Activated naive CD4-positive, alpha-beta T cell treated with anti-CD3 and anti-CD28 coated beads for 36 hours (primary cell): ENCODE measurements at regions of chr1 and their contacts with region 1.

Region 1: DNA sequence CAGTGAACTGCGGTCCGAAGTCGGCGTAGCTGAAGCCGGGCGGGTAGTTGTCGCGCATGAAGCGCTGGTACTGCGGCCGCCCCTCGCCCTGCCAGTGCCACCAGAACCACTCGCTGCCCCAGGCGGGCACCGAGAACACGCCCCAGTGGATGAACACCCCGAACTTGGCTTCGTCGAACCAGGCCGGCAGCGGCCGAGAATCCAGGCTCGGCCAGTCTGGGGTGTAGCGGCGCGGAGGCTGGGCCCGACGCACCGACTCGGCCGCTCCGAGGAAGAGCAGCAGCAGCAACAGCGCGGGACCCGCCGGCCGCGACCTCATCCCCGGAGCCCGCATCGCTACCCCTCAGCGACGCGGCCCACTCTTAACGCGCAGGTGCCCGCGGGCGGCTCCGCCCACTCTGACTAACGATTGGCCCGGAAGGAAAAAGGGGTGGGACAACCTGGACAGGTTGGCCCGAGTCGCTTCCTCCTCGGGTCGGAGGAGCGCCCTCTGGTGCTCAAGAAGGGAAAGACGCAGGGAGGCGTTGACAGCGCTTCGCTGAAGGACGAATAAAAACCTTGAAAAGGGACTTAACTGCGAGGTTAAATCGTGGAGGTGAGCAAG is at the start of gene FUCA1:
- DNase-seq: peak; percentile 95
- H3K4me3 Mint-ChIP-seq: peak within 1 kb of the TSS; percentile 79
- H3K27ac Mint-ChIP-seq: peak within 1 kb of the TSS; percentile 26
- H3K4me1 Mint-ChIP-seq: peaks cover 18% of the 10 kb centered on the region
- H3K27me3 Mint-ChIP-seq: no peaks in the 10 kb centered on the region
- total RNA-seq, gene FUCA1: 4.9 to 5.2 TPM

Region 2: DNA sequence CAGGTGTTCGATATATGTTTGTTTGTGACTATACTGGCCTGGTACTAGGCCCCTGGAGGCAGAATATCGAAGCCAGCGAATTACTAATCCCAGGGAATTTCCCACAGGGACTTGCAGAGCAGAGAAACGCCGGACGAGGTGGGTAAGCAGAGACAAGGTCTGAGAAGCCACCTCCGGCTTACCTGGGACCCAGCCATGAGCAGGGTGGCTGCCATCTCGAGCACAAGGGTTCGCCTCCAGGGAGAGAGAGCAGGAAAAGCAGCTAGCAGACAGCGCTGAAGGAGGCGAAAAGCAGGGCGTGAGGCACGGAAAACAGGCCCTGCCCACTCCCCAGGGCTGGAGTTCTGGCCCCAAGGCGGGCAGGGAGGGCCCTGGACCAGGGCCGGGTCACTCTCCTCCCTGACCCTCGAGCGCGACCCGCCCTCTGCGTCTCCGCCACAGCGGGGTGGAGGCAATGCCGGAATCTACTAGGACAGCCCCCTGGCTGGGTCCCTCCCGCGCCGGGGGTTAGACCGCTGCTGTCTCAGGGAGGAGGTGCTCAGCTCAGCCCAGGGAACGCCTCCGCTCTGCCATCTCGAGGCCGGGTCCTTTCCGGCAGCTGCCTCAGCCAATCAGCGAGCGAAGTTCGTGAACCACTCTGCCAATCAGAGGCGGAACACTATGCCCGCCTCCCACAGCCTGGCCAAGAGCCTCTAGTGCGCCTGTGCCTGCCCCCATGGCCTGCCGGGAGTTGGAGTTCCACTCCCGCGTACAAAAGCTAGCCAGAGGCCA is 500.1 kb before region 1 on chr1:
- CTCF ChIA-PET with region 1: no interaction called
- intact Hi-C with region 1: loop called (anchors 5 kb)
- DNase-seq: peak; percentile 99
- H3K4me3 Mint-ChIP-seq: peak overlapping the region; percentile 97
- H3K27ac Mint-ChIP-seq: peak overlapping the region; percentile 98
- H3K4me1 Mint-ChIP-seq: peaks cover 22% of the 10 kb centered on the region
- H3K27me3 Mint-ChIP-seq: no peaks in the 10 kb centered on the region

Region 3: DNA sequence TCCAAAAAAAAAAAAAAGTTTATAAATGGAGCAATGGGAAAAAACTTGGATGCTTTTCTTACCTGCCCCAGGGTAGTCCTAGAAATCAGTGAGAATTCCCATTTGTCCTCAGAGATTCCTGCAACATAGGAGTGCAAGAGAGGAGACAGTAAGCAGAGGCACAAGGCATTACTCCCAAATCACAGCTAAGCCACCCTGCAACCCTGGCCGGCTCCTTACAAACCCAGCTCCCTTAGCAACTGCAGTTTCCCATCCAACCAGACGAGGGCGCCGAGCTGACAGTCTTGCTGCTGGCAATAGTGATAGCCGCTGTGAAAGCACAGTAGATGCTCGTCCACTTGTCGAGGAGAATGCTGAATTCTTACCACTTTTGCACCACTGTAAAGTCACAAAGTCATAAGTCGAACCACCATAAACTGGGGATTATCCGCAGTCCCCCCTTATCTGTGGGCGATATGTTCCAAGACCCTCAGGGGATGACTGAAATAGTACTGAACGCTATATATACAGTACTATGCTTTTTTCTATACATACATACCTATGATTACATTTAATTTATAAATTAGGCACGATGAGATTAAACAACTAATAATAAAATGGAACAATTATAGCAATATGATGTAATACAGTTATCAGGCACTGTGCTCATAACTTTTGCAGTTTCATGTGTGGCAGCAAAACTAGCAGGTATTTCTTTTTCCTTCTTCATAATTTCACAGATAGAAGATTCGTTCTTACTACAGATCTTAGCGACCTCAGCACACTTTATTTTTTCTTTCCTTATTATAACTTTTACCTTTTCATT is 95.8 kb before region 1 on chr1:
- CTCF ChIA-PET with region 1: interaction called, 6 read pairs
- intact Hi-C with region 1: loop called (anchors 1 kb)
- DNase-seq: peak; percentile 95
- H3K4me3 Mint-ChIP-seq: no peak overlapping the region
- H3K27ac Mint-ChIP-seq: no peak overlapping the region
- H3K4me1 Mint-ChIP-seq: peaks cover 31% of the 10 kb centered on the region
- H3K27me3 Mint-ChIP-seq: no peaks in the 10 kb centered on the region

Region 4: GRCh38 chr1:23809751-23810171 is 58.3 kb before region 1 on chr1:
- CTCF ChIA-PET with region 1: interaction called, 20 read pairs
- intact Hi-C with region 1: loop called (anchors 1 kb)
- DNase-seq: peak; percentile 90
- H3K4me3 Mint-ChIP-seq: no peak overlapping the region
- H3K27ac Mint-ChIP-seq: no peak overlapping the region
- H3K4me1 Mint-ChIP-seq: peaks cover 10% of the 10 kb centered on the region
- H3K27me3 Mint-ChIP-seq: no peaks in the 10 kb centered on the region

Region 5: GRCh38 chr1:23916209-23917131 is 48.4 kb after region 1 on chr1:
- CTCF ChIA-PET with region 1: no interaction called
- intact Hi-C with region 1: loop called (anchors 2 kb)
- DNase-seq: peak; percentile 76
- H3K4me3 Mint-ChIP-seq: no peak overlapping the region
- H3K27ac Mint-ChIP-seq: no peak overlapping the region
- H3K4me1 Mint-ChIP-seq: peaks cover 19% of the 10 kb centered on the region
- H3K27me3 Mint-ChIP-seq: no peaks in the 10 kb centered on the region

Region 6: GRCh38 chr1:23979878-23980724 is 112.0 kb after region 1 on chr1 and contains the start of gene SRSF10:
- CTCF ChIA-PET with region 1: no interaction called
- intact Hi-C with region 1: no loop called
- DNase-seq: peak; percentile 99
- H3K4me3 Mint-ChIP-seq: peak within 1 kb of the TSS; percentile 94
- H3K27ac Mint-ChIP-seq: peak within 1 kb of the TSS; percentile 99
- H3K4me1 Mint-ChIP-seq: peaks cover 31% of the 10 kb centered on the region
- H3K27me3 Mint-ChIP-seq: no peaks in the 10 kb centered on the region
- total RNA-seq, gene SRSF10: 169 to 178 TPM

Region 7: DNA sequence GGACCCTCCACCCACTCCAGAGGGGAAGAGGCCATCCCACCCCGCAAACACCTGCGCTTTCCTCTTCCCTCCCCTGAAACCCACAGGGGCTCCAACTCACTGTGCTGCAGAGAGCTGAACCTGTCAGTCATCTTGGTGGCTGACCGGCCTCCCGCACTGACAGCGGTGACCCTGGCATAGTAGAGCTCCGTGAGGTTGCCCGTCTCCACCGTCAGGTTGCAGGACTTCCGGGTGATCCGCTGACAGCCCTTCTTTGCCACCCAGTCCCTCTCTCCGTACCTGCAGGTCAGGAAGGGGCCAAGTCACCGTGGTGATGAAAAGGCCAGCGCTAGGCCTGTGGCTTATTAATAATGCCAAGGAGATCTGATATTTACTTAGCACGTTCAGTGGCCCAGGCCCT is 269.0 kb after region 1 on chr1:
- CTCF ChIA-PET with region 1: no interaction called
- intact Hi-C with region 1: no loop called
- DNase-seq: no peak
- H3K4me3 Mint-ChIP-seq: no peak overlapping the region
- H3K27ac Mint-ChIP-seq: no peak overlapping the region
- H3K4me1 Mint-ChIP-seq: no peaks in the 10 kb centered on the region
- H3K27me3 Mint-ChIP-seq: no peaks in the 10 kb centered on the region